Dendritic cell treated with granulocyte-macrophage colony-stimulating factor and Interleukin-4, amounts not matched to agents 40 ng/mL and 50 ng/mL, for 4 days (primary cell): ENCODE measurements at regions of chr20 and their contacts with region 1.

Region 1: GRCh38 chr20:57383447-57384347 is 7.5 kb upstream of the RBM38 start:
- H3K4me3 Mint-ChIP-seq: no peak overlapping the region
- H3K27ac Mint-ChIP-seq: no peak overlapping the region
- H3K4me1 Mint-ChIP-seq: no peaks in the 10 kb centered on the region
- H3K27me3 Mint-ChIP-seq: no peaks in the 10 kb centered on the region

Region 2: DNA sequence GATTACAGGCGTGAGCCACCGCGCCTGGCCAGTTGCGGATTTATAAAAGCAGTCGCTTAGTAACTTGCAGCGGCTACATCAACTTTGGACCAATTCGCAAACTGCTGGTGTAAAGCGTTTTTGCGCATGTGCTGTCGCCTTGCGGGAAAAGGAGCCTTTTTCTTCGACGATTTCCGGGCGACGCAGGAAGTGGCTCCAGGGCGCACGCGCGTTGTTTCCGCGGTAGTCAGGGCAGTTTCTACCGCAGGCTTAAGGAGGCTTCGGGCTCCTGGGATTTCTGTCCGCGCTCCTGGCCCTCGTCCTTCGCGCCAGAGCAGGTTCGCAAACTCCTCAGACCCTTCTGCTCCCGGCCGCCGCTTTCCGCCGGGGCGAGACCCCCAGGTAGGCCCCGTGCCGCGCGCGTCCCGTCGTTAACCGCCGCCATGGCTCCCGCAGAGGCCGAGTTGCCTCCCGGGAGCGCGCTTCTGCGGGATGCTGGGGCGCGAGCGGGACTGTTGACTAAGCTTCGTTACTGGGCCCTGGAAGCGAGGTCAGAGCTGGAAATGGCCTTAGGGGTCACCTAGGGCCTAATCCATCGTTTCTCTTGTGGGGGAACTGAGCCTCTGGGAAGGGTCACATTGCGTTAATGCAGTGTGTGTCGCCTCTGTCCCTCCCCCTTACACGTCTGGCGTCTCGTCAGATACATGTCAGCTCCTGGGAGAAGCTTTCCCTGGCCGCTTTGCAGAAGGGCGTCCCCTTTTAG is 32.5 kb before region 1 on chr20 and contains the start of gene RAE1:
- intact Hi-C with region 1: no loop called
- H3K4me3 Mint-ChIP-seq: peak within 1 kb of the TSS; percentile 87
- H3K27ac Mint-ChIP-seq: peak within 1 kb of the TSS; percentile 87
- H3K4me1 Mint-ChIP-seq: peaks cover 16% of the 10 kb centered on the region
- H3K27me3 Mint-ChIP-seq: peaks cover 22% of the 10 kb centered on the region

Region 3: DNA sequence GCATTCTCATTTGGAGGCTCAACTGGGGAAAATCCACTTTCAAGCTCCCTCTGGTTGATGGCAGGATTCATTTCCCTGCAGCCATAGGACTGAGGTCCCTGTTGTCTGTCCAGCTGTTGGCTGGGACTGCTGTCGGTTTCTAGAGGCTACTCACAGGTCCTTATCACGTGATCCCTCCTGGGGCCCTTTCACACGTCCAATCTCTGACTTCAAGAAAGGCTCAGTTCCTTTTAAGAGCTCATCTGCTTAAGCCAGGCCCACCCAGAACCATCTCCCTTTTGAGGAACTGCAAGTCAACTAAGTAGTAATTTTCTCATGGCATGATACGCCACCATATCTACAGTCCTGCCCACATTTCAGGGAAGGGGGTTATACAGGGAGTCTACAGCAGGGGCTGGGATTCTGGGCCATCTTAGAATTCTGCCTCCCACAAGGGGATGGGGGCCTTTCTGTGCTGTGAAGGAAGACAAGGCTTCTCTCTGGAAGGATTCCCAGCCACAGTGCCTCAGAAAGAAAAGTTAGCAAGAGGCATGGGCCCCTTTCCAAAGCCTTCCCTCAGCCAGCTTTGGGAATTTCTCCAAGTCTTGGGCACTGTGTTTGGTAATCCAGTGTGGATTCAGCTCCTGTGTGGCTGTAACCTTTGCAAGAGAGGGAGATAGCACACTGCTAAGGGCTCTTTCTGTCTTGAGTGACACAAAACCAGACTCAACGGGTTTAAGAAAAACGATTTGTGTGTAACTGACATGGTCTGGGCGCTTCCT is 74.9 kb after region 1 on chr20:
- intact Hi-C with region 1: no loop called
- H3K4me3 Mint-ChIP-seq: no peak overlapping the region
- H3K27ac Mint-ChIP-seq: peak overlapping the region; percentile 21
- H3K4me1 Mint-ChIP-seq: peaks cover 58% of the 10 kb centered on the region
- H3K27me3 Mint-ChIP-seq: peaks cover 8% of the 10 kb centered on the region

Region 4: GRCh38 chr20:57495985-57496384 is 112.3 kb after region 1 on chr20:
- intact Hi-C with region 1: loop called (anchors 1 kb)
- H3K4me3 Mint-ChIP-seq: no peak overlapping the region
- H3K27ac Mint-ChIP-seq: no peak overlapping the region
- H3K4me1 Mint-ChIP-seq: peaks cover 11% of the 10 kb centered on the region
- H3K27me3 Mint-ChIP-seq: peaks cover 47% of the 10 kb centered on the region